ENCODE measurements at regions of chr6 and their contacts with region 1.

Region 1: DNA sequence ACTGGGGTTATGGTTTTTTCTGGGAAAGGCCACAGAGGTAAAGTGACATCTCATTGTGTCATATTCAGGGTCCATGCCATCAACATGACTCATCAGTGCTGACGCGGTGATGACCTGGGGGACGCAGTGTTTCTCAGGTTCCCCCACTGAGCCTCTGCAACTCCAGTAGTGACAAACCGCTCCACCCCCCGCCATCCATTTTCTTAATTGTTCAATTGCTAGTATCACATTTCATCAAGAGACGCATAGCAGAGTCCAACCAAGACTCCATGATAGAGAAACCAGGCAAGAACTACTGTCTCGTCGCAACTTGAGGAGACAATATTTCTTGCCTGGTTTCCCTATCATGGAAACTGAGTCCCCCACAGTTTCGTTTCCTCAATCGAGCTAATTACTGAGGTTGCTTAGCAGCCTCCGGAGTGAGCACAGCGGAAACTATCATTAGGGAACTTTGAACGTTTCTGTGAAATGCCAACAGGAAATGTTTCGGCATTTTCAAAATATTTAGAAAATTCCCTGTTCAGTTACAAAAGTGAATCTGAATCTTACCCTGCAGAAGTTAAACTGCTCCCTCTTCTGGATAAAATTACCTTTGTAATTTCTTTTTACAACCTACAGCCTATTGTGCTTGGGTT is 12.2 kb upstream of the SERPINB1 start:
- DNase-seq: peak; percentile 82 to 87
- H3K4me3 ChIP-seq: peak overlapping the region; percentile 60
- H3K27ac ChIP-seq: peak overlapping the region; percentile 99
- H3K4me1 ChIP-seq: peaks cover 24% of the 10 kb centered on the region
- H3K27me3 ChIP-seq: no peaks in the 10 kb centered on the region
- CTCF ChIP-seq: peak; percentile 58

Region 2: GRCh38 chr6:2237001-2237400 is 616.9 kb before region 1 on chr6:
- CTCF ChIA-PET with region 1: interaction called, 14 read pairs
- POLR2A ChIA-PET with region 1: no interaction called
- intact Hi-C with region 1: no loop called
- DNase-seq: peak in 1 of 2 experiments; percentile 68
- H3K4me3 ChIP-seq: no peak overlapping the region
- H3K27ac ChIP-seq: no peak overlapping the region
- H3K4me1 ChIP-seq: no peaks in the 10 kb centered on the region
- H3K27me3 ChIP-seq: no peaks in the 10 kb centered on the region
- CTCF ChIP-seq: no peak

Region 3: DNA sequence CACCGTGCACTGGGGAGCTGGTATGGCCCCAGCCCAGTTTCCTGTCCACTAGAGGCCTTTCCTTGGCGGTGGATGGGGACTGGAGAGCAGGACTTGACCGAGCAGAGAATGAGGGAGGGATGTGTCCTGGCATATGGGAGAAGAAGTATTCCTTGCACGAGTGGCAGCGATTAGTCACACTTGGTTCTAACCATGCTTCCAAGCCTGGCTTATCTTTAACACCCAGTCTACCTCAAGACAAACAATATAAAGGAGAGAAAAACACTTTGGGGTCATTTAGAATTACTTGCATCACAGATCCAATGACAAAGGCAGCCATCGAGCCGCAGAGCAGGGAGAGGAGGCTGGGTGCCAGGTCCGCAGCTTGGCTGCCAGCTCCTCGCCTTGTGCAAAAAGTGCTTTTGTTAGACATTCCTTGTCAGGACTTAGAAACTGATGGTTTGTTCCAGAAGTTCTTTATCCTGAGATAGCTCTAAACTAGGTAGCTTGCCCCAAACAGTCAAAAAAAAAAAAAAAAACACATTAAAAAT is 393.6 kb before region 1 on chr6:
- CTCF ChIA-PET with region 1: no interaction called
- POLR2A ChIA-PET with region 1: no interaction called
- intact Hi-C with region 1: no loop called
- DNase-seq: no peak
- H3K4me3 ChIP-seq: no peak overlapping the region
- H3K27ac ChIP-seq: no peak overlapping the region
- H3K4me1 ChIP-seq: peaks cover 8% of the 10 kb centered on the region; the same call in 1 of the 2 replicates
- H3K27me3 ChIP-seq: no peaks in the 10 kb centered on the region
- CTCF ChIP-seq: no peak

Region 4: DNA sequence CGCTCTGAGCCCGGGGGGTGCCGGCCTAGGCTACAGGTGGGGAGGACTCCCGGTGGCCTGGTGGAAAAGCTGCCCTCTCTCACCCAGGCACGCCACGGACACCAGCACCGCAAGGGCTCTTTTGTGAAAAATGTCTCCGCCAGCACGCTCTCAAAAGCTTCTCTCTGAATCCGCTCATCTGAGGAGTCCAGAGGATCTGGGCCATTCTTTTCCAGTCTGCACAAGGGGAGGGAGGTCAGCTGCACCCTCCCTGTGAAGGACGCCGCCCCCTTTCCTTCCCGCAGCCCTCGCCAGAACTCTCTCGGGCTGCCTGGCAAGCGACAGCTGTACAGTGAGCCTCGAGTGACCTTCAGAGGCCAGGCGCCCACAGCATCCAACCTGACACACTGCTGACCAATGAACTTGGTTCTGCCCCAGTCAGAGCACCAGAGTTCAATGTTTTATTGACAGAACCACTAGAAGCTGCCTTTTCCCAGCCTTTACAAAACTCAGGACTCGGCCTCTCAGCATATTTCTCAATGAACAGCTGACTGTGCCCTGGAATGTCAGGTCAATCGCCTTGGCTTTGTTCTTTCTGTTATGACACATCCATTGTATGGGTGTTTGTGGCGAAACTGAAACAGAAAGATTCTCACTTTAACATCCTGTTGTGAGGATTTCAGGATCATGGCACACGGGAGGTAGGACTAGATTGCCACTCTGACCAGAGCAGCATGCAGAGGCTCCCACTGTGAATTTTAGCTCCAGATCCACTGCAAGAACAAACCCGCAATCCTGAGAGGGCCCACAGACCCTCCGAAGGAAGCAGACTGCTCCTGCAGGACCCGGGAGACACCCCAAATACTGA is 22.6 kb after region 1 on chr6:
- CTCF ChIA-PET with region 1: interaction called, 4 read pairs
- POLR2A ChIA-PET with region 1: interaction called, 6 read pairs
- intact Hi-C with region 1: loop called (anchors 1 kb)
- DNase-seq: peak; percentile 63 to 92
- H3K4me3 ChIP-seq: peak overlapping the region; percentile 49; the same call in 1 of the 2 replicates
- H3K27ac ChIP-seq: peak overlapping the region; percentile 99
- H3K4me1 ChIP-seq: peaks cover 30% of the 10 kb centered on the region
- H3K27me3 ChIP-seq: no peaks in the 10 kb centered on the region
- CTCF ChIP-seq: no peak

Region 5: DNA sequence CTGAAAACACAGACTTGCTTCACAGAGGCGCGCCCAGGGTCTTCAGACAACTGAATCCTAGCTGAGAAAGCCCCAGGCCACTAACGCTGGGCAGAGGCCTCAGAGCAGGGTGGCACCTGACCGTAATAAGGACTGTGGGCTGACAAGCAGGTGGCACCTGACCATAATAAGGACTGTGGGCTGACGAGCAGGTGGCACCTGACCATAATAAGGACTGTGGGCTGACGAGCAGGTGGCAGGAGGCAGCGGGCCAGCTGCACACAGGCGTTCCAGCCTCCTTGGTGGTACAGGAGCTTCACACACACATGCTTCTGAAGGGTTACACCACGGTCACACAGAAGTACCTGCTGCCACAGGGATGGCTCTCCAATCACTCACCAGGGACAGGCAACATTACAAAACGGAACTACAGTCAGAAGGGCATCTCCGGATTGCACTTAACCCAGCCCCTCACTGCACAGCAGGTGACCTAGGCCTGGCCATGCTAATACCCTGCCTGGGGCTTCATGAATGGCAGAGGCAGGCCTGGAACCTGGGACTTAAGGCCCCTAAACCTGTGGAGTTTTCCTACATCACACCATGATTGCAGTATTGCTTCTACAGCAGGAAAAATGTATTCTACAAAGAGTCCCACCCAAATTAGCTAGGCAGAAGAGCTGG is 455.6 kb after region 1 on chr6:
- CTCF ChIA-PET with region 1: no interaction called
- POLR2A ChIA-PET with region 1: no interaction called
- intact Hi-C with region 1: no loop called
- DNase-seq: no peak
- H3K4me3 ChIP-seq: no peak overlapping the region
- H3K27ac ChIP-seq: no peak overlapping the region
- H3K4me1 ChIP-seq: no peaks in the 10 kb centered on the region
- H3K27me3 ChIP-seq: no peaks in the 10 kb centered on the region
- CTCF ChIP-seq: no peak

Measured in PC-9 (cell line).